ENCODE measurements at regions of chr14 and their contacts with region 1.

Region 1: GRCh38 chr14:102029956-102030355 is 56.9 kb downstream of the HSP90AA1 start:
- DNase-seq: peak; percentile 22
- ATAC-seq: no peak
- H3K4me3 ChIP-seq: no peak overlapping the region
- H3K27ac ChIP-seq: no peak overlapping the region
- H3K4me1 ChIP-seq: no peaks in the 10 kb centered on the region; the same call in 1 of the 2 replicates
- H3K27me3 ChIP-seq: no peaks in the 10 kb centered on the region
- CTCF ChIP-seq: no peak
- EP300 ChIP-seq: no peak
- POLR2A ChIP-seq: no peak
- RAD21 ChIP-seq: no peak

Region 2: DNA sequence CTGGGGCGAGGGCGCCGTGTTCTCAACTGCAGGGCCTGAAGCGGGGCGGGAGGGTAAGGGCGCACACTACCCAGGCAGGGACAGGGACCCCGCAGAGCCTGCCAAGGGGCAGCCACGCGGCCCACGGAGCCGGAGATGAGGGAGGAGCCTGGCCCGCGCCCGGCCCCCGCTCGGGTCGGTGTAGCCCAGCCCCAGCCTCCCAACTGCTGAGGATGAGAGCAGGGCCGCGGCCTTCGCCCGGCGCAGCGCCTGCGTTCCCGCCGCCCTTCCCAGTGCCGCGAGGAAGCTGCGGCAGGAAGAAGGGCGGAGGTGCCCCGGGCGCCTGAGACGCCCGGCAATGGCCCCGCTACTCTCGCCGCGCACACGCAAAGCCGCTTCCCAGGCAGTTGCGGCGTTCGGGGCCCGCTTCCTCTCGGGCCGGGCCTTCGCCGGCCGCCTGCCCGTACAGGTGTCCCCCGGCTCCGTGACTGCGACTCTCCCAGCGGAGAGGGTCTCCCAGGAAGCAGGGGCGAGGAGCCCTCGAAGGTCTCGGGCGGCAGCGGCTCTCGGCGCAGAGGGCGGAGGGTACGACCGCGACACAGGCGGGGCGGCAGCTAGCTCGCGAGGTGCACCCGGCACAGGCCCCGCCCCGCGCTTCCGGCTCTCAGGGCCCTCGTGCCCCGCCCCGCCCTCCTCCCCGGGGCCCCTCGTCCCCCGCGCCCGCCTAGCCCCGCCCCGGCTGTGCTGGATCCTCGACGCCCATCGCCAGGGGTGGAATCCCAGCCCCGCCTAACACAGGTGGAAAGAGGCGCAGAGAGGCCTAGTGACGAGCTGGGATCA is 1815.8 kb before region 1 on chr14:
- CTCF ChIA-PET with region 1: no interaction called
- POLR2A ChIA-PET with region 1: no interaction called
- in situ Hi-C with region 1: no loop called
- intact Hi-C with region 1: loop called (anchors 10 kb)
- DNase-seq: peak; percentile 85
- ATAC-seq: peak; percentile 95
- H3K4me3 ChIP-seq: peak overlapping the region; percentile 73 to 90 (median 88)
- H3K27ac ChIP-seq: peak overlapping the region; percentile 99
- H3K4me1 ChIP-seq: peaks cover 30% of the 10 kb centered on the region
- H3K27me3 ChIP-seq: no peaks in the 10 kb centered on the region
- CTCF ChIP-seq: no peak
- EP300 ChIP-seq: no peak
- POLR2A ChIP-seq: peak; percentile 87 to 97
- RAD21 ChIP-seq: peak; percentile 50; the same call in 1 of the 2 replicates

Region 3: DNA sequence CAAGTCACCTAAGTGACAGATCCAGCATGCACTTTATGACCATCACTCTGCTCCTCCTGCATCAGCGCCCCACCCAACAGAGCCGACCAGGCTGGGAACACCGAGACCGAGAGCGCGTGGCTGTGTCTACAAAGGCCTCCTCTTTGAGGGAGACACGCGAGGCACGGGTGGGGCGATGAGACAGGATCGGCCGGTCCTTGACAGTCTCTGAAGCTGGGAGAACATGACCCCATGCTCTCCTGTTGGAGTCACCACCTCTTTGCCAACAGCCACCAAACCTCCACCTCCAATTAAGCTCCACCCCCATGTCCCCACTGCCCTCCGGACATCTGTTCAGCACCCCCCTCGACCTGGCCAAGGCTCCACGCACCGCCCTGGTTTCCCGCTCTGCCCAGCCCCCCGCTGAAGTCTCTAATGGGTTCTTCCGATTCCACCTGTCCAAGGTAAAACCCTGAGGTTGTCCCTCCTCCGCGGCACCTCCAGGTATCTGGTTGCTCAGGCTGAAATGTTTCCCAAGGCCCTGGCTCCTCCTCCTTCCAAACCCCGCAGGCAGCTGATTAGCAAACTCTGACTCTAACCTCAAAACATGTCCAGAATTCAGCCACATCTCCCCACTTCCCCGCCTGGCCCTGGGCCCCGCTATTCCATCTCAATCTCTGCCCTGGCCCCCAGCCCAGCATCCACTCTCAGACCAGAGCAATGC is 25.4 kb after region 1 on chr14:
- CTCF ChIA-PET with region 1: no interaction called
- POLR2A ChIA-PET with region 1: no interaction called
- in situ Hi-C with region 1: no loop called
- intact Hi-C with region 1: no loop called
- DNase-seq: peak; percentile 18
- ATAC-seq: peak; percentile 45
- H3K4me3 ChIP-seq: peak overlapping the region in 1 of 3 experiments; percentile 25; a peak in 2 of 6 replicates
- H3K27ac ChIP-seq: no peak overlapping the region
- H3K4me1 ChIP-seq: peaks cover 35% of the 10 kb centered on the region
- H3K27me3 ChIP-seq: no peaks in the 10 kb centered on the region; a peak in 2 of 5 replicates
- CTCF ChIP-seq: no peak
- EP300 ChIP-seq: no peak
- POLR2A ChIP-seq: no peak
- RAD21 ChIP-seq: no peak

Region 4: GRCh38 chr14:102390064-102390855 is 360.3 kb after region 1 on chr14:
- CTCF ChIA-PET with region 1: no interaction called
- POLR2A ChIA-PET with region 1: no interaction called
- in situ Hi-C with region 1: no loop called
- intact Hi-C with region 1: no loop called
- DNase-seq: peak; percentile 9
- ATAC-seq: no peak
- H3K4me3 ChIP-seq: no peak overlapping the region
- H3K27ac ChIP-seq: peak overlapping the region; percentile 61
- H3K4me1 ChIP-seq: peaks cover 31% of the 10 kb centered on the region
- H3K27me3 ChIP-seq: no peaks in the 10 kb centered on the region
- CTCF ChIP-seq: no peak
- EP300 ChIP-seq: no peak
- POLR2A ChIP-seq: no peak
- RAD21 ChIP-seq: no peak